ENCODE measurements at regions of chr6 and their contacts with region 1.

Region 1: DNA sequence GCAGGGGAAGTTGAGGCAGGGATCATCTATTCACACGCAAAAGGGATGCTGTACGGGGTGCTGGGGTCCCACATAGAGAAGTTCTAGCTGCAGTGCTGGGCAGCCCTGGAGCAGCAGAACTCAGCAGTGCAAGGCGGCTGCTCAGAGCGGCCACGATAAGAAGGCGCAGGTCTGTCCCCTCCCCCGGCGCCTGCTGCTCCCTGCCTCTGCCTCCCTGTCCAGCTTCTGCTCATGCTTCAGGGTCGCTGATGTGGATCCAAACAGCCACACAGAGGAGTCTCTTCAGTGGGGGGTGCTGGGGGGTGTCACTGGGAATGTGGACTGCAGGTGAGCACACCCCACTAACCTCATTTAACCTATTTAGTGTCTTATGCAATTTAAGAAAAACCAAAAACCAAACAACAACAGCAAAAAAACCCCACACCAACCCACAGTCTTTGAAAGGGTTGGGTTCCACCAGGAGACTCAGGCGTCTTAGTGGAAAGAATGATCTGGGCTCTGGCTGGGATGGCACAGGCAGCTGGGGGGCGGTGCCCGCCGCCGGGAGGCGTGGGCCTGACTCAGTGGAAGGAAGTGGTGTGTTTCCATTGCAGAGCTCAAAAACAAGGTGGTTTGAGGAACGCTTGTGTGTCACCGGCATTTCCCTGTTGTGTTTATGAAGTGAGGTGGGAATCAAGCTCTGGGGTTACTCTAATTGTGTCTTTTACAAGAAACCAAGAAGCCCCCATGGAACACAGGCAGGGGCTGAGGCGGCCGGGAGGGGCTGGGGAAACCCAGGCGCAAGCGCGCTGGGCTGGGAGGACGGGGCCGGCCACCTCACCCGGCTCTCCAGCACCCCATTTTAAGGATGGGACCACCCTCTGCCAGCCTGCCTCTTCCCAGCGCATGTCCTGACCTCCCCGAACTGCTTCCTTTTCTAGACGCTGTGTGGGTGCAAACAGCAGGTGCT is 55.1 kb downstream of the IRF4 start:
- DNase-seq: peak; percentile 96
- H3K4me3 Mint-ChIP-seq: peak overlapping the region; percentile 43
- H3K27ac Mint-ChIP-seq: peak overlapping the region; percentile 95
- H3K4me1 Mint-ChIP-seq: peaks cover 50% of the 10 kb centered on the region
- H3K27me3 Mint-ChIP-seq: no peaks in the 10 kb centered on the region

Region 2: DNA sequence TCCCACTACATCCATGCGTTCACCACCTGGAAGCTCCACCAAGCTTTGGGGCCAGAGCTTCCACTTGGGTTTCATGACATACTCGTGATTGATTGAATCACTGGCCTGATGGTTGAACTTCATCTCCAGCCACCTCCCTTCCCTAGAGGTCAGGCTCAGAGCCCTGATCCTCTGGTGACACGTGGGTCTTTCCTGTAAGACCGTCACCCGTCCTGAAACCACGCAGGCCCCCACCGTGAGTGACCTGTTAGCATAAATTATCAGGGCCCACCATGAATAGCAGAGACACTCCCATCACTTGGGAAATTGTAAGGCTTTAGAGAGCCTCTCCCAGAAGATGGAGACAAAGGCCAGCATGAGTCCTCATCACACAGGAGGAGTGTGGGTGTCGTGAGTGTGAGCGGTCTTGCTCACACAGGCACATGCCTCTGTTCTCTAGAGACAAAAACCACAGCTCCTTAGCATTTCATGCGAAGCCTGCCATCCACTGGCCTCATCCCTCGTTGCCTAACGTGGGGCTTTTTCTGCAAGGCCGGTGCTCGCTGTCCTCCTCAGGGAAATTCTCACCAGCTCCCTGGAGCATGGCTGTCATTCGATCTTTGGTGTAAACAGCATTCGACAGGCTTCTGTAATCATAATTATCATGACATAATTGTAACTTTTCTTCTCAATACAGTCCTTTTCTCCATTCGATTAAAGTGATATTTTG is 219.5 kb before region 1 on chr6:
- CTCF ChIA-PET with region 1: no interaction called
- intact Hi-C with region 1: loop called (anchors 1 kb)
- DNase-seq: peak; percentile 60
- H3K4me3 Mint-ChIP-seq: no peak overlapping the region
- H3K27ac Mint-ChIP-seq: peak overlapping the region; percentile 95
- H3K4me1 Mint-ChIP-seq: peaks cover 65% of the 10 kb centered on the region
- H3K27me3 Mint-ChIP-seq: no peaks in the 10 kb centered on the region

Region 3: GRCh38 chr6:411421-412145 is 35.1 kb before region 1 on chr6:
- CTCF ChIA-PET with region 1: no interaction called
- intact Hi-C with region 1: no loop called
- DNase-seq: peak; percentile 26
- H3K4me3 Mint-ChIP-seq: no peak overlapping the region
- H3K27ac Mint-ChIP-seq: peak overlapping the region; percentile 83
- H3K4me1 Mint-ChIP-seq: peaks cover 60% of the 10 kb centered on the region
- H3K27me3 Mint-ChIP-seq: no peaks in the 10 kb centered on the region

Region 4: GRCh38 chr6:422433-423054 is 24.1 kb before region 1 on chr6:
- CTCF ChIA-PET with region 1: no interaction called
- intact Hi-C with region 1: loop called (anchors 1 kb)
- DNase-seq: peak; percentile 91
- H3K4me3 Mint-ChIP-seq: no peak overlapping the region
- H3K27ac Mint-ChIP-seq: peak overlapping the region; percentile 81
- H3K4me1 Mint-ChIP-seq: peaks cover 31% of the 10 kb centered on the region
- H3K27me3 Mint-ChIP-seq: no peaks in the 10 kb centered on the region

Region 5: GRCh38 chr6:474453-475185 is 27.9 kb after region 1 on chr6:
- CTCF ChIA-PET with region 1: interaction called, 3 read pairs
- intact Hi-C with region 1: loop called (anchors 1 kb)
- DNase-seq: peak; percentile 95
- H3K4me3 Mint-ChIP-seq: peak overlapping the region; percentile 62
- H3K27ac Mint-ChIP-seq: peak overlapping the region; percentile 76
- H3K4me1 Mint-ChIP-seq: peaks cover 70% of the 10 kb centered on the region
- H3K27me3 Mint-ChIP-seq: no peaks in the 10 kb centered on the region

Region 6: GRCh38 chr6:490251-491037 is 43.8 kb after region 1 on chr6:
- CTCF ChIA-PET with region 1: interaction called, 11 read pairs
- intact Hi-C with region 1: loop called (anchors 1 kb)
- DNase-seq: peak; percentile 80
- H3K4me3 Mint-ChIP-seq: peak overlapping the region; percentile 41
- H3K27ac Mint-ChIP-seq: peak overlapping the region; percentile 95
- H3K4me1 Mint-ChIP-seq: peaks cover 94% of the 10 kb centered on the region
- H3K27me3 Mint-ChIP-seq: no peaks in the 10 kb centered on the region

Region 7: GRCh38 chr6:506508-506907 is 59.8 kb after region 1 on chr6:
- CTCF ChIA-PET with region 1: no interaction called
- intact Hi-C with region 1: loop called (anchors 1 kb)
- DNase-seq: peak; percentile 89
- H3K4me3 Mint-ChIP-seq: peak overlapping the region; percentile 45
- H3K27ac Mint-ChIP-seq: peak overlapping the region; percentile 99
- H3K4me1 Mint-ChIP-seq: peaks cover 95% of the 10 kb centered on the region
- H3K27me3 Mint-ChIP-seq: no peaks in the 10 kb centered on the region

Region 8: DNA sequence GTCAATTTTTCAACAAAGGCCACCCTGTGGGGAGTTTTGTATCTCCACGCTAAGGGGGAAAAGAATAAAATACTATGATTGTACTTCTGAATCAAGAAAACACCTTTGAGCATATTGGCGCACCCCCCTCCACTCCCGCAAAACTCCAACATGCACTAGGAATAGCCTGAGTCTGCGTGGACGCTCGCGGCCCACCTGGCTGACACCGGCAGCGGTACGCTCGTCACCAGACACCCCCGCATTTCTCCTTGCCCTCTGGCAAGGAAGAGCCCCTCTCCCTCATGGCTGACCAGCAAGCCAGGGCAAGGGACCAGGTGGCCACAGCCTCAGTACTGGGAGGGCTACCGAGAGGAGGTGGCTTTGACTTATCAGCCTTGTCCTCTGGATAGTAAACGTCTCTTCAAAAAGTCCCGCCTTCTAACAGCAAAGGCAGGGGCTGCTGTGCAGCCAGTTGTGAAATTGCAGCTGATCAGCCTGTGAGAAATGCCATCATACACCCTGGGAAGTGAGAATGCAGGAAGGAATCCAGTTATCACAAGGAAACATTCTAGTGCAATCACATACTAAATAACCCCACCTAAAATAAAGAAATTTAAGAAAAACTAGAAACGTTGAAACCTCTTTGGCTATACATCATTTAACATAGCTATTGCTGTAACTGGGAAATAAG is 126.0 kb after region 1 on chr6:
- CTCF ChIA-PET with region 1: no interaction called
- intact Hi-C with region 1: no loop called
- DNase-seq: no peak
- H3K4me3 Mint-ChIP-seq: no peak overlapping the region
- H3K27ac Mint-ChIP-seq: no peak overlapping the region
- H3K4me1 Mint-ChIP-seq: peaks cover 9% of the 10 kb centered on the region
- H3K27me3 Mint-ChIP-seq: no peaks in the 10 kb centered on the region

Region 9: DNA sequence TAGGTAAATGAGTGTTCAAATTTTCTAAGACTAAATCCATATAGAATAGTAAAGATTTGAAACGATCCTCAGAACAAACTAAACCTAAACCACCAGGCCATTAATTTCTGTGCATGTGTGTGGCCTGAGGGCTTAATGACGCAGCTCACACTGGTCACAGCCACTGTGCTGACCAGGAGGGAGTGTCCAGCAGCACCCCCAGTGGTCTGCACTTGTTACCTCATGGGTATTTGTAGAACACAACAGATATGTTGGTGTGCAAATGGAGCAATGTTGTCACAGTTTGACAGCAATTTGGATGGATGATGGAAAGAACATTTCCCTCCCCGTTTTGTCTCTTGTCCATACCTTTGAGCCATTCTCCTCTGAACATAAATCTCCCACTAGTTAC is 368.7 kb after region 1 on chr6:
- CTCF ChIA-PET with region 1: no interaction called
- intact Hi-C with region 1: loop called (anchors 5 kb)
- DNase-seq: no peak
- H3K4me3 Mint-ChIP-seq: no peak overlapping the region
- H3K27ac Mint-ChIP-seq: no peak overlapping the region
- H3K4me1 Mint-ChIP-seq: peaks cover 25% of the 10 kb centered on the region
- H3K27me3 Mint-ChIP-seq: peaks cover 7% of the 10 kb centered on the region

Measured in activated naive CD4-positive, alpha-beta T cell treated with anti-CD3 and anti-CD28 coated beads for 36 hours (primary cell).